ENCODE measurements at regions of chr5 and their contacts with region 1.

Region 1: GRCh38 chr5:149325166-149325735 is 20.0 kb upstream of the GRPEL2 start:
- DNase-seq: no peak
- H3K4me3 ChIP-seq: no peak overlapping the region
- H3K27ac ChIP-seq: no peak overlapping the region
- H3K4me1 ChIP-seq: no peaks in the 10 kb centered on the region
- CTCF ChIP-seq: no peak

Region 2: DNA sequence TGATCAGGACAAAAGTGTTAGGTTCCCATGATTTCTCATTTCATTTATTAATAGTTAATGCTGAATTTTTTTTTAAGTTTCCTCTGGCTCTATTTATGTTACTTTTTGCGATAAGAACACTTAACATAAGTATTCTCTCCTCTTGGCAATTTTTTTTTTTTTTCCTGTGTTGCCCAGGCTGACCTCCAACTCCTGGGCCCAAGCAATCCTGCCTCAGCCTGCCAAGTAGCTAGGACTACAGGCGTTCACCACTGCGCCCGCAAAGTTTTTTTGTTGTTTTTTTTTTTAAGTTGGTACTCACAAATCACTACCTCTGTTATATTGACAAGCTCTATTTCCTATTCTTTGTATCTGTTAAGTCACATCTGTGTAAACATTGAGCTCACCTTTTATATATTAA is 26.9 kb after region 1 on chr5:
- CTCF ChIA-PET with region 1: no interaction called
- POLR2A ChIA-PET with region 1: interaction called, 15 read pairs
- intact Hi-C with region 1: no loop called
- DNase-seq: no peak
- H3K4me3 ChIP-seq: no peak overlapping the region
- H3K27ac ChIP-seq: no peak overlapping the region
- H3K4me1 ChIP-seq: peaks cover 39% of the 10 kb centered on the region
- CTCF ChIP-seq: no peak